ENCODE measurements at regions of chr11 and their contacts with region 1.

Region 1: GRCh38 chr11:74449369-74449931 is 17.9 kb downstream of the KCNE3 start:
- DNase-seq: peak; percentile 84
- H3K4me3 Mint-ChIP-seq: no peak overlapping the region
- H3K27ac Mint-ChIP-seq: no peak overlapping the region
- H3K4me1 Mint-ChIP-seq: peaks cover 14% of the 10 kb centered on the region
- H3K27me3 Mint-ChIP-seq: no peaks in the 10 kb centered on the region
- CTCF ChIP-seq: peak; percentile 72

Region 2: DNA sequence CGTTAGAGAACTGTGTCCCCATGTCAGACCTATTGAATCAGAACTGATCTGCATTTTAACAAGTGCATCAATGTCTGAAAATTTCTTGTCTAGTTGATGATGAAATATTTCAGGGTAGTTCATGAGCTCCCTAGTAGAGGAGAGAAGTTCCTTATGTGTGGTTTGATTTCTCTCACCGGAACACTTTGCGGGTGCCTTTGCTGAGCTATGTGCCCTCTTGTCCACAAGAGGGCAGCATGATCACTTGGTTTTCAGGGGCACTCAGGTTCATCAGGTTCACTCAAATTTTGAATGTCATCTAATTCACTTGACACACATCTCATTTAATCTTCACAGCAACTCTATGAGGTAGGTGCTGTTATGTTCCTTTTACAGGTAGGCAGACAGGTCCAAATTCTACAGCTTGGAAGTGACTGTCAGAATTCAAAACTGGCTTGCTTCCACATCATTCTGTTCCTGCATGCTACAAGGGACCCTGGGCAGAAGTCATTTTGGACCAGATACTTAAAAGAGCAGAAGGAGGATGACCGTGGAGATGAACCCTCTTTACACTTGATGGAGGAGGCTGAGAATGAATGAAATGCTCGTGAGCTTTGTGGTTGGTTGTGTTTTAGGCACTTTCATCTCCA is 193.6 kb before region 1 on chr11:
- CTCF ChIA-PET with region 1: interaction called, 210 read pairs
- POLR2A ChIA-PET with region 1: interaction called, 10 read pairs
- intact Hi-C with region 1: loop called (anchors 1 kb)
- DNase-seq: peak; percentile 79
- H3K4me3 Mint-ChIP-seq: no peak overlapping the region
- H3K27ac Mint-ChIP-seq: no peak overlapping the region
- H3K4me1 Mint-ChIP-seq: peaks cover 15% of the 10 kb centered on the region
- H3K27me3 Mint-ChIP-seq: no peaks in the 10 kb centered on the region
- CTCF ChIP-seq: peak; percentile 76

Region 3: GRCh38 chr11:74388678-74389327 is 60.6 kb before region 1 on chr11:
- CTCF ChIA-PET with region 1: interaction called, 94 read pairs
- POLR2A ChIA-PET with region 1: interaction called, 3 read pairs
- intact Hi-C with region 1: loop called (anchors 1 kb)
- DNase-seq: peak; percentile 63
- H3K4me3 Mint-ChIP-seq: no peak overlapping the region
- H3K27ac Mint-ChIP-seq: no peak overlapping the region
- H3K4me1 Mint-ChIP-seq: peaks cover 14% of the 10 kb centered on the region
- H3K27me3 Mint-ChIP-seq: no peaks in the 10 kb centered on the region
- CTCF ChIP-seq: peak; percentile 52

Region 4: GRCh38 chr11:74492974-74493790 is 43.7 kb after region 1 on chr11 and contains the start of gene LIPT2:
- CTCF ChIA-PET with region 1: interaction called, 10 read pairs
- POLR2A ChIA-PET with region 1: interaction called, 16 read pairs
- intact Hi-C with region 1: no loop called
- DNase-seq: peak; percentile 98
- H3K4me3 Mint-ChIP-seq: peak within 1 kb of the TSS; percentile 82
- H3K27ac Mint-ChIP-seq: peak within 1 kb of the TSS; percentile 67
- H3K4me1 Mint-ChIP-seq: peaks cover 11% of the 10 kb centered on the region
- H3K27me3 Mint-ChIP-seq: no peaks in the 10 kb centered on the region
- CTCF ChIP-seq: no peak
- total RNA-seq, gene LIPT2: 3.0 and 7.9 TPM in 2 replicates

Region 5: GRCh38 chr11:74570266-74571061 is 121.0 kb after region 1 on chr11:
- CTCF ChIA-PET with region 1: interaction called, 447 read pairs
- POLR2A ChIA-PET with region 1: interaction called, 14 read pairs
- intact Hi-C with region 1: loop called (anchors 1 kb)
- DNase-seq: peak; percentile 71
- H3K4me3 Mint-ChIP-seq: no peak overlapping the region
- H3K27ac Mint-ChIP-seq: no peak overlapping the region
- H3K4me1 Mint-ChIP-seq: no peaks in the 10 kb centered on the region
- H3K27me3 Mint-ChIP-seq: no peaks in the 10 kb centered on the region
- CTCF ChIP-seq: peak; percentile 83

Region 6: DNA sequence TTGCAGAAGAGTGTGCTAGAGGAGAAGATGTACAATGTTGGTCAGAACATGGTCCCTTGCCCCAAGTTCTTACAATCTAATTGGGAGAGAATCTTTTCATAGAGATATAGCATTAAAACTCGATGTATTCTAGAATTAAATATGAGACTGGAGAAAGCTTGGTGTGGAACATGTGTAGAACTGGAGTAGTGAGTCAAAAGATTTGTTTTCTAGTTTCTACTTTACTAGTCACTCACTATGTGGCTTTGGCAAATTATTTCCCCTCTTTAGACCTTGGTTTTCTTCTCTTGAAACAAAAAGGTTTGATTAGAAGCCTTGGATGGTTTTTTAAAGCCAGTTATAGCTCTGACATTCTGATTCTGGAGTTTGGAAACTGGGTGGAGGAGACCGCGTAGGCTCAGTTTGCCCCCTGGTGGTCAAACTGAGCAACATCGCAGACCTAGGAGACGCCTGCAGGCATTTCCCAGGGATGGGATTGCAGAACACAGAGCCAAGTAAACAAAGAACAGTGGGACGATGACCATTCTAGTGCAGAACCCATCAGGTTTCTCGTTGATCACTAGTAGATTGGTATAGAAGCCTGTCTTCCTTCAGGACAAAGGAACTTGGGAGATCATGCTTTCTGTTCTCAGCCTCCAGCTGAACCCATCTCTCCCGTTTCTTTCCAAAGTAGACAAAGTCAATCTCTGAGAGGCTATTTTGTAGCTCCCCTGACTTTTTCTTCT is 290.3 kb after region 1 on chr11:
- CTCF ChIA-PET with region 1: interaction called, 3 read pairs
- POLR2A ChIA-PET with region 1: no interaction called
- intact Hi-C with region 1: loop called (anchors 5 kb)
- DNase-seq: peak; percentile 79
- H3K4me3 Mint-ChIP-seq: no peak overlapping the region
- H3K27ac Mint-ChIP-seq: no peak overlapping the region
- H3K4me1 Mint-ChIP-seq: no peaks in the 10 kb centered on the region
- H3K27me3 Mint-ChIP-seq: no peaks in the 10 kb centered on the region
- CTCF ChIP-seq: peak; percentile 81

Measured in MCF 10A (cell line).